PC-9 (cell line): ENCODE measurements at regions of chr1 and their contacts with region 1.

Region 1: GRCh38 chr1:202112839-202113672 is 9.7 kb upstream of the GPR37L1 start:
- DNase-seq: peak; percentile 67 to 86
- H3K4me3 ChIP-seq: peak overlapping the region; percentile 23; the same call in 1 of the 2 replicates
- H3K27ac ChIP-seq: peak overlapping the region; percentile 97
- H3K4me1 ChIP-seq: peaks cover 92% of the 10 kb centered on the region
- H3K27me3 ChIP-seq: no peaks in the 10 kb centered on the region
- CTCF ChIP-seq: no peak

Region 2: GRCh38 chr1:201456499-201457309 is 656.4 kb before region 1 on chr1:
- CTCF ChIA-PET with region 1: no interaction called
- POLR2A ChIA-PET with region 1: no interaction called
- intact Hi-C with region 1: no loop called
- DNase-seq: peak; percentile 76 to 96
- H3K4me3 ChIP-seq: no peak overlapping the region
- H3K27ac ChIP-seq: peak overlapping the region; percentile 95
- H3K4me1 ChIP-seq: peaks cover 56% of the 10 kb centered on the region
- H3K27me3 ChIP-seq: no peaks in the 10 kb centered on the region
- CTCF ChIP-seq: no peak

Region 3: DNA sequence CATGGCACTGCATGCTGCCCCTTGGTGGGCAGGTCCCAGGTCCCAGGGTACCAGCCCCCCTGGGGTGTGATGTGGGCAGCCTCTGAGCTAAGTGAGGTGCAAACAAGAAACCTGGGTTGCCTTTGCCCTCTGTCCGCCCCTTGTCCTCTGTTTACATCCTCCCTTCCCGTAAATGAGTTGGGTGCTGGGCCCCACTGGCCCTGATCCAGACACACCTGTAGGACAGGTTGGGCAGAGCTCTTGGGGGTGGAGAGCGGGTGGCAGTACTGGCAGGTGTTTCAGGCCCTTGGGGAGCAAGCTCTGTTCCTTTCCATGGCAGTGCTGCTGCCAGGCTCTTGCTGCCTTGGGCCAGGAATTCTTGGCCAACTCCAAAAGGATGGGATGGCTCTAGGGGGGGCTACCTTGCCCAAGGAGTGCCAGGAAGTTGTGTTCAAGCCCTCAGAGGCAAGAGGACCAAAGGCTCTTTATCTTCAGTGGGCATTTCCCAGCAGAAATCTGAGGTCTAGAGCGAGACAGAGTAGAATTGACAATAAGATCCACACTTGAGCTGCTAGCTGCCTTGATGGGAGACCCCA is 66.7 kb before region 1 on chr1:
- CTCF ChIA-PET with region 1: interaction called, 3 read pairs
- POLR2A ChIA-PET with region 1: interaction called, 17 read pairs
- intact Hi-C with region 1: loop called (anchors 1 kb)
- DNase-seq: peak; percentile 95 to 97
- H3K4me3 ChIP-seq: peak overlapping the region; percentile 24; the same call in 1 of the 2 replicates
- H3K27ac ChIP-seq: peak overlapping the region; percentile 98
- H3K4me1 ChIP-seq: peaks cover 77% of the 10 kb centered on the region
- H3K27me3 ChIP-seq: no peaks in the 10 kb centered on the region
- CTCF ChIP-seq: no peak

Region 4: DNA sequence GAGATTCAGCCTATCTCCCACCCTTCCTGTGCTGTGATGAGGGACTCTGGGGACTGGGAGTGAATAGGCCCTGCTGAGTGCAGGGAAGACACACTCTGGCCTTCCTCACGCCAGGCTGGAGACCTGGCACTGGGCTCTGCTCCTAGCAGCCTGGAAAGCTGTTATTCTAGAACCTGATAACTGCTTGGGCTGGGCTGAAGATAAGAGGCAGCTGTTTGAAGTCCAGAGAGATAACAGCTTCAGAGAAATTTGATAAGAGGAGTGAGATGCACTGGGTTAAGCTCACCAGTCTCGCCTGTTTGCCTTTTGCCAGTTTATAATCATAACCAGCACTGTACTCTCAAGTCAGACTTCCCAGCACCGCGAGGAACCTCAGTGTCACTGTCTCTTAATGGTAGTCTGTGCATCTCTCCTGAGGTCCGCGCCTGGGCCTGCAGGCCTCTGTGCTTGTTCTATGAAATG is 37.0 kb before region 1 on chr1:
- CTCF ChIA-PET with region 1: no interaction called
- POLR2A ChIA-PET with region 1: interaction called, 16 read pairs
- intact Hi-C with region 1: no loop called
- DNase-seq: no peak
- H3K4me3 ChIP-seq: no peak overlapping the region
- H3K27ac ChIP-seq: peak overlapping the region; percentile 41
- H3K4me1 ChIP-seq: peaks cover 37% of the 10 kb centered on the region
- H3K27me3 ChIP-seq: no peaks in the 10 kb centered on the region
- CTCF ChIP-seq: no peak